ENCODE measurements at regions of chr10 and their contacts with region 1.

Region 1: GRCh38 chr10:62804356-62805230 is at the start of gene ADO:
- DNase-seq: peak; percentile 73
- H3K4me3 ChIP-seq: peak within 1 kb of the TSS; percentile 96 to 100 (median 98)
- H3K27ac ChIP-seq: peak within 1 kb of the TSS; percentile 76
- H3K4me1 ChIP-seq: peaks cover 20% of the 10 kb centered on the region
- H3K27me3 ChIP-seq: no peaks in the 10 kb centered on the region
- CTCF ChIP-seq: no peak
- total RNA-seq, gene ADO: 22.3 to 26.5 TPM

Region 2: DNA sequence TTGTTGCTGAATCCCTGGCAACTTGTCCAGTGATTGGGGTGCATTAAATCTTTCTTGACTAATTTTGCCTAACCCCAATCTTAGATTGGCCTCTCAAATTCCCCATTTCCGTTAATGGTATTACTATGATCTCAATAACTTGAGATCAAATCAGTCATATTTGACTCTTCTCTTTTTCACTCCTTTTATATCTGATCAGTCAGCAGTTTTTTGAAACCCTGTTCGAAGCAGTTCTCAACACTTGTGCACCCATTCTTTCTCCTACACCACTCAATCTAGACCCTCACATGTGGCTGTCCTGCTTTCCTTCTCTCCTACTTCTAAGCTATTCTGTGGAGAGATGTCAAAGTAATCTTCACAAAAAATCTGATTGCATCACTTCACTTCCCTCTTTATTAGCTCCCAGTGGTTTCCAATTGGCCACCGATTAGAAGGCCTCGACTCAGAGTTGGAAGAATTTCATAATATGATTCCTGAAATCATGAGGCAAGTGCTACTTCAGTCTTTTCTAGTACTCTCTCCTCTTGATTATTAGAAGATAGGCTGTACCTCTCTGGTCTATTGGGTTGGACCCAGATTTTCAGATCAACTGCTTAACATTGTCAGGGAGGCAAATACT is 301.5 kb before region 1 on chr10:
- CTCF ChIA-PET with region 1: no interaction called
- dilution Hi-C with region 1: no loop called
- in situ Hi-C with region 1: no loop called
- intact Hi-C with region 1: no loop called
- DNase-seq: no peak
- H3K4me3 ChIP-seq: no peak overlapping the region
- H3K27ac ChIP-seq: no peak overlapping the region
- H3K4me1 ChIP-seq: peaks cover 4% of the 10 kb centered on the region
- H3K27me3 ChIP-seq: no peaks in the 10 kb centered on the region
- CTCF ChIP-seq: no peak

Region 3: DNA sequence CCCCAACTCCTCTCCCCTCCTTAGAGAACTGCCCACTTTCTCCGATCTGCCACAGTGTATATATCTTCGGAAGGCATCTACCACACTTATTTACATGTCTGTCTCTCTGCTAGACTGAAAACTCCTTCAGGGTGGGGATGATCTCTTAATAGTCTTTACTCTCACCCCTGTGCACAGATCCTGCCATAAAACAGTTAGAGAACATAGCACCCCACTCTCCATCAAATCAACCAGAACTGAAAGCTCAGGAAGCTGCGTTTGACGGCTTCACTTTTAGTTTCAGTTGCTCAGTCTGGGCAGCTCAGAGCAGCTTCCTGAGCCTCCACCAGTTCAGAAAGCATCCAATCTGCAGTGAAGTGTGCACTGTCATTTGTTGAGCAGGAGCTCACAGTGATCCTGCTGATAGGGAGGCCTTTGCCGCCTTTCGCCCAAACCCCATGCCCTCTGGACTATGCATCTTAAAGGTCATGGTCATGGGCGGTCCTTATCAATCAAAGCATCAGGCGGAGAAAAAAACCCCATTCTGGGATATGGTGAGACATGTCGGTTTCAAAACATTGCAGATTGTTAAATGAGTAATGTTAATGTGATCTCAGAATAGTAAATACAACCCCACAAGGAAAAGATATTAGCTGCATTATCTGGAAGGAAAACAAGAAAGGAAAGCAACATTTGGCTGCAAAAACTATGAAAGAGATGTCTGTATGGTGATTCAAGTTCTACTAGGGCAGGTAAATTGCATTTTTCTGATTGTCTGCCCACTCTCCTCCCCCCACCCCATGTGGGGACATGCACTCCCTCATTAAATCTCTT is 167.1 kb before region 1 on chr10:
- CTCF ChIA-PET with region 1: no interaction called
- dilution Hi-C with region 1: no loop called
- in situ Hi-C with region 1: no loop called
- intact Hi-C with region 1: loop called (anchors 1 kb)
- DNase-seq: peak; percentile 89
- H3K4me3 ChIP-seq: peak overlapping the region in 1 of 3 experiments; percentile 12
- H3K27ac ChIP-seq: peak overlapping the region; percentile 27
- H3K4me1 ChIP-seq: peaks cover 14% of the 10 kb centered on the region
- H3K27me3 ChIP-seq: no peaks in the 10 kb centered on the region
- CTCF ChIP-seq: no peak

Region 4: GRCh38 chr10:62732841-62733653 is 71.5 kb before region 1 on chr10:
- CTCF ChIA-PET with region 1: no interaction called
- dilution Hi-C with region 1: no loop called
- in situ Hi-C with region 1: no loop called
- intact Hi-C with region 1: loop called (anchors 2 kb)
- DNase-seq: peak; percentile 95
- H3K4me3 ChIP-seq: no peak overlapping the region
- H3K27ac ChIP-seq: no peak overlapping the region
- H3K4me1 ChIP-seq: peaks cover 40% of the 10 kb centered on the region
- H3K27me3 ChIP-seq: no peaks in the 10 kb centered on the region
- CTCF ChIP-seq: no peak

Region 5: DNA sequence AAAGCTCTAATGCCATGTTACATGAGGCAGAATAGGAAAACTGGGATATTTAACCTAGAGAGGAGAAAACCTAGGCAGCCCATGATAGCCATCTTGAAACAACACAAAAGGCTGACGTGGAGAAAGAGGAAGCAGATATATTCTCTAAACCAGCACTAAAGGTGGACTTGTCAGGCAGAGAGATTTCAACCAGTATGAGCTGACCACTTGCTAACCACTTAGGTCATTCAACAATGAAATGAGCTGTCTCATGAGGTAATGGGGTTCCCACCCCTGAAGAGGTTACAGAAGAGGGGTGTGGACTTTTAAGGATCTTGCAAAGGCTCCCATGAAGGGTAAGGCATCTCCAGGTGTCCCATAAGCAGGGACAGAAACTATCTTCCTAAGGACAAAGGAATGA is 38.4 kb after region 1 on chr10:
- CTCF ChIA-PET with region 1: no interaction called
- dilution Hi-C with region 1: no loop called
- in situ Hi-C with region 1: no loop called
- intact Hi-C with region 1: no loop called
- DNase-seq: no peak
- H3K4me3 ChIP-seq: no peak overlapping the region
- H3K27ac ChIP-seq: no peak overlapping the region
- H3K4me1 ChIP-seq: peaks cover 4% of the 10 kb centered on the region
- H3K27me3 ChIP-seq: no peaks in the 10 kb centered on the region
- CTCF ChIP-seq: no peak